PC-9 (cell line): ENCODE measurements at regions of chr3 and their contacts with region 1.

Region 1: DNA sequence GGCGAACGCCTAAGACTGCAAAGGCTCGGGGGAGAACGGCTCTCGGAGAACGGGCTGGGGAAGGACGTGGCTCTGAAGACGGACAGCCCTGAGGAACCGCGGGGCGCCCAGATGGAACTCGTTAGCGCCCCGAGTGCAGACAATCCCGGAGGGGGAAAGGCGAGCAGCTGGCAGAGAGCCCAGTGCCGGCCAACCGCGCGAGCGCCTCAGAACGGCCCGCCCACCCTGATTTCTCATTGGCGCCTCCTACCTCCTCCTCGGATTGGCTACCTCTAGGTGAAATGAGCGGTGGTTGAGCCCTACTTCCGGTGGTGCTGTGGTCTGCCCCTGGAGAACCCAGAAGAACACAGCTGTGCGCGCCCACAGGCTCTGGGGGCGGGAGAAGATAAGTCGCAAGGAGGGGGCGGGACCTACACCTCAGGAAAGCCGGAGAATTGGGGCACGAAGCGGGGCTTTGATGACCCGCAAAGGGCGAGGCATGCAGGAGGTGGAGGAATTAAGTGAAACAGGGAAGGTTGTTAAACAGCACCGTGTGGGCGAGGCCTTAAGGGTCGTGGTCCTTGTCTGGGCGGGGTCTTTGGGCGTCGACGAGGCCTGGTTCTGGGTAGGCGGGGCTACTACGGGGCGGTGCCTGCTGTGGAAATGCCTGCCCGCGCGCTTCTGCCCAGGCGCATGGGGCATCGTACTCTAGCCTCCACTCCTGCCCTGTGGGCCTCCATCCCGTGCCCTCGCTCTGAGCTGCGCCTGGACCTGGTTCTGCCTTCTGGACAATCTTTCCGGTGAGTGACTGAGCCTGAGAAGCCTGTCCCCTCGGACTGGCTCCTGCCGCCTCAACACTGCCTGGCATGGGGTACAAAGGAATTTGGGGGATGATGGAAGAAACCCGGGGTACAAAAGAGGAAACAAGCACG is at the start of gene OGG1:
- DNase-seq: peak; percentile 92 to 96
- H3K4me3 ChIP-seq: peak within 1 kb of the TSS; percentile 59
- H3K27ac ChIP-seq: no peak within 1 kb of the TSS; the same call in 1 of the 2 replicates
- H3K4me1 ChIP-seq: peaks cover 14% of the 10 kb centered on the region
- H3K27me3 ChIP-seq: no peaks in the 10 kb centered on the region
- CTCF ChIP-seq: no peak
- total RNA-seq, gene OGG1: 22.1 and 24.3 TPM in 2 replicates

Region 2: GRCh38 chr3:9404680-9405079 is 345.2 kb before region 1 on chr3:
- CTCF ChIA-PET with region 1: no interaction called
- POLR2A ChIA-PET with region 1: no interaction called
- intact Hi-C with region 1: no loop called
- DNase-seq: no peak
- H3K4me3 ChIP-seq: no peak overlapping the region
- H3K27ac ChIP-seq: no peak overlapping the region
- H3K4me1 ChIP-seq: peaks cover 55% of the 10 kb centered on the region
- H3K27me3 ChIP-seq: no peaks in the 10 kb centered on the region
- CTCF ChIP-seq: no peak

Region 3: GRCh38 chr3:9731206-9732079 is 18.5 kb before region 1 on chr3 and contains the start of gene BRPF1:
- CTCF ChIA-PET with region 1: no interaction called
- POLR2A ChIA-PET with region 1: no interaction called
- intact Hi-C with region 1: loop called (anchors 1 kb)
- DNase-seq: peak; percentile 91 to 98
- H3K4me3 ChIP-seq: peak within 1 kb of the TSS; percentile 95
- H3K27ac ChIP-seq: peak within 1 kb of the TSS; percentile 73
- H3K4me1 ChIP-seq: peaks cover 19% of the 10 kb centered on the region
- H3K27me3 ChIP-seq: no peaks in the 10 kb centered on the region
- CTCF ChIP-seq: 0 out of 2 replicates have a peak, but pooled peaks have one; percentile 13
- total RNA-seq, gene BRPF1: 15.9 and 18.3 TPM in 2 replicates

Region 4: DNA sequence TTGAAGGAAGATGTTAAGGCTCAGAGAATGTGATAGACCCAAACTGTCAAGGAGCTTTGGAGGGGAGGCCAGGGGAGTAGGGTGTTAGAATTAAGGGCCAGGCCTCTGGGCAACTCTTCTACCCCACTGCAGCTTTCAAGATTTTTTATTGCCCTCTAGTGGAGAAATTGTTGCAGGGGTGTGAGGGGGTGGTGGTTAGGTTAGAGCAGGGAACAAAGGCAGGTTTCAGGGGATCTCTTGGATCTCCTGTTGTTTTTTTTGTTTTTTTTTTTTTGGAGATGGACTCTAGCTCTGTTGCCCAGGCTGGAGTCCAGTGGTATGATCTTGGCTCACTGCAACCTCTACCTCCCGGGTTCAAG is 572.4 kb after region 1 on chr3:
- CTCF ChIA-PET with region 1: no interaction called
- POLR2A ChIA-PET with region 1: no interaction called
- intact Hi-C with region 1: loop called (anchors 10 kb)
- DNase-seq: peak in 1 of 2 experiments; percentile 14
- H3K4me3 ChIP-seq: no peak overlapping the region
- H3K27ac ChIP-seq: no peak overlapping the region
- H3K4me1 ChIP-seq: peaks cover 8% of the 10 kb centered on the region
- H3K27me3 ChIP-seq: peaks cover 38% of the 10 kb centered on the region
- CTCF ChIP-seq: peak; percentile 59; the same call in 1 of the 2 replicates